Activated T-helper 2 cell treated with anti-CD3 and anti-CD28 coated beads, Interferon-gamma antibody, Interleukin-2, Interleukin-4, amounts not matched to agents 10 μg/mL and 5 μg/mL and 100 μg/mL, durations not matched to agents 14 hours and 24 hours and 36 hours (primary cell): ENCODE measurements at regions of chr3 and their contacts with region 1.

Region 1: GRCh38 chr3:190701096-190701532 is 161.4 kb downstream of the GMNC start:
- DNase-seq: no peak
- H3K4me3 Mint-ChIP-seq: no peak overlapping the region
- H3K27ac Mint-ChIP-seq: no peak overlapping the region
- H3K4me1 Mint-ChIP-seq: peaks cover 8% of the 10 kb centered on the region
- H3K27me3 Mint-ChIP-seq: peaks cover 33% of the 10 kb centered on the region

Region 2: DNA sequence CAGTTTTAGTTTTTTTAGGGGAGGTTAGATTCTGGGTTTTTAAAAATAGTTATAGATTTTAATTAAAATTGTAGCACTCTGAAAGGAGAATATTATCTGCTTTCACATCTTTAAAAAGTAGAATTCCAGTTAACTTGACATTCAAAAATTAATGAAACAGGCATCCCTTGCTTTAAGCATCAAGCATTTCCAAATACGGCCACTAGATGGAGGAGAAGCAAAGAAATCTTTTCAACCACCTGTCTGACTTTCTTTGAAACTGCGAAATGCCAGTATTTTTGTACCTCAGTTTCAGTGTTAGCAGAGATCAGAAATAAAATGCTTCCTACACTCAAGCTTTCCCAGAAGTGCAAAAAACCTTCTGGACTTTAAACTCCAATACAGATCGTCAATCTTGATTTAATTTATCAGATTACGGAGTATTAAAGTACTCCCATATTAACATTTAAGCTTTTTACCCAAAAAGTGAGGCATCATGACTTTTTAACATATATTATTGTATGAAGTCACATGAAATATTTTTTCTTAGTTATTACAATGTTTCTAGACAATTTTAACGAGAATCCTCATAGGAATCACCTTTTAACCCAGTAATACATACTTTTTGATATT is 733.8 kb before region 1 on chr3:
- intact Hi-C with region 1: loop called (anchors 2 kb)
- DNase-seq: no peak
- H3K4me3 Mint-ChIP-seq: no peak overlapping the region
- H3K27ac Mint-ChIP-seq: no peak overlapping the region
- H3K4me1 Mint-ChIP-seq: peaks cover 6% of the 10 kb centered on the region
- H3K27me3 Mint-ChIP-seq: peaks cover 19% of the 10 kb centered on the region

Region 3: DNA sequence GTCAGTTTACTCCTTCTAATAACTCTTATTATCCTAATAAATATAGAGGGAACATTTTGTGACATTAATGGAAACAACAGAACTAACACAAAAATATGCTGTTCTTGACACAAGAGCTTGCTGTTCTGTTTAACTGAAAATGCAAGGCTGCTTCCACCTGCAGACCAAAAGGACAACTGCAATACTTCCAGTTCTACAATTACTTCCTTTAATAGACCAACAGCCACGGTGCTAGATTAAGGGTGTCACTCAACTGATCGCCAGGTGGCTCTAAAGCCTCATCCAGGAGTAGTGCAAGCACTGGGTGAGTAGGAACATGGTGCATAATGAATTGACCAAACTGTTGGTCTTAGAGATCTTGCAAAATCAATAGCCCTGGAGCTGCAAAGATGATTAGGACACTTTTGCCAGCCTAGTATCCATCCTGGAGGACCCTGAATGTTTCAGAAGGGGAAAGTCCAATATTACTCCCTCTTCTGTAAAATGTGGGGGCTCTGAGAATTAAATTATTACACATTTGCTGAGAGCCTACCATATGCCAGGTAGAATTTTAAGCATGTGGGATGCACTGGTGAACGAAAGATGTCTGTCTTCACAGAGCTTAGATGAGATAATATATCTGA is 316.8 kb before region 1 on chr3:
- intact Hi-C with region 1: loop called (anchors 5 kb)
- DNase-seq: no peak
- H3K4me3 Mint-ChIP-seq: no peak overlapping the region
- H3K27ac Mint-ChIP-seq: no peak overlapping the region
- H3K4me1 Mint-ChIP-seq: no peaks in the 10 kb centered on the region
- H3K27me3 Mint-ChIP-seq: peaks cover 7% of the 10 kb centered on the region

Region 4: DNA sequence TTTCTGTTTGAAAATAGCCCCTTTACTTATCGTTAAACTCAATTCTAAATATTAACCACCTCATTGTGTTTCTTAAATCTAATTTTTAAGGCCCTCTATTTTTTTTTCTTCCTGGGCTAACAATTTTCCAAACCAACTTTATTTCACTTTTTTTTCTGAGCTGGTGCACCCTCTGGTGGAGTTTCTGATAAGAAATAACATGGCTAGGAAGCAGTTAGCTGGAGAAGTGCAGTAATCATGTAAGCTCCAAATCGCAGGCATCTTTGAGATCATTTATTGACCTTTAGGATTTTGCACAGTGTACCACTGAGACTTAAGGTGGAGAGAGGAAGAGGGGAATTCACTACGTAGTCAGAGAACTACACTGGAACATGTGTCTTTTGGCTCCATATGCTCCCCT is 257.9 kb before region 1 on chr3:
- intact Hi-C with region 1: loop called (anchors 5 kb)
- DNase-seq: no peak
- H3K4me3 Mint-ChIP-seq: no peak overlapping the region
- H3K27ac Mint-ChIP-seq: no peak overlapping the region
- H3K4me1 Mint-ChIP-seq: peaks cover 10% of the 10 kb centered on the region
- H3K27me3 Mint-ChIP-seq: peaks cover 22% of the 10 kb centered on the region

Region 5: DNA sequence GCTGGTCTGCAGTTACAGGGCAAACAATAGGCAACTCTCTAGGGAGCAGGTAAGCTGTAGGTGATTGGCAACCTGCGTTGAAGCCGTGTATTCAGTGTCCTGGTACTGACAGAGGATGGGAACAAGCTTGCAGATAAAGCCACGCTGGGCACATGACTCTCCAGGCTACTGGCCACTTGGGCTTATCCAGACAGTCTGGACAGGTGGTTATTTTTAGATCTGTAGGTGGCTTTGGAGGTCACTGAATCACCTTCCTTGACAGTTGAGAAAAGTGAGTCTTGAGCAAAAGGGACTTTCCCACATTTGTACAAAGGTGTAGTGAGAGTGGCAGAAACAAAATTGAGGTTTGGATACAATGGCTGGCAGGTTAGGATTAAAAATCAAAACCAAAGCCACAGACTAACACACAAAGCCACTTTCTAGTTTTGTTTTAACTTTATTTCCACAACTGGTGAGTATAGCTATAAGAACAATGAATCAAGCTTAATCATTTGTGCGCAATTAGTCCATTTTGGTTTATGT is 209.5 kb before region 1 on chr3:
- intact Hi-C with region 1: loop called (anchors 5 kb)
- DNase-seq: no peak
- H3K4me3 Mint-ChIP-seq: no peak overlapping the region
- H3K27ac Mint-ChIP-seq: no peak overlapping the region
- H3K4me1 Mint-ChIP-seq: peaks cover 35% of the 10 kb centered on the region
- H3K27me3 Mint-ChIP-seq: peaks cover 73% of the 10 kb centered on the region

Region 6: GRCh38 chr3:190513409-190514162 is 187.5 kb before region 1 on chr3 and contains the start of gene IL1RAP:
- intact Hi-C with region 1: loop called (anchors 2 kb)
- DNase-seq: peak; percentile 89
- H3K4me3 Mint-ChIP-seq: peak within 1 kb of the TSS; percentile 90
- H3K27ac Mint-ChIP-seq: peak within 1 kb of the TSS; percentile 97
- H3K4me1 Mint-ChIP-seq: peaks cover 39% of the 10 kb centered on the region
- H3K27me3 Mint-ChIP-seq: no peaks in the 10 kb centered on the region
- total RNA-seq, gene IL1RAP: 34.5 and 38.6 TPM in 2 replicates

Region 7: DNA sequence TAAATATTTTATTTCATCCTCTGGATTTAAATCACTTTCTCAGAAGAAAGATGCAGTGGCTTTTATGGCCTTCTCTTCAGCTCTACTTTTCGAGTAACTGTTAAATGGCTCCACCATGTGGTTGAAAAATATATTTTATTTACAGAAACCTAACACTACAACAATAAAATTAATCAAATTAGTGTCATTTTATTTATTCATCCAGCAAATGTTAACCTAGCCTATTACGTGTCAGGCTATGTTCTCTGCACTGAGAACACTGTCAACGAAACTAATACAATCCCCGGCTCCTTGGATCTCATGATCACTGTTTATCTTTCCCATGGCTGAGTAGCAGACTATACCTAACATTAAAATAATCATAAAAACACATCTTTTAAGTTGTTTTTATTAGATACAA is 349.9 kb after region 1 on chr3:
- intact Hi-C with region 1: loop called (anchors 5 kb)
- DNase-seq: no peak
- H3K4me3 Mint-ChIP-seq: no peak overlapping the region
- H3K27ac Mint-ChIP-seq: no peak overlapping the region
- H3K4me1 Mint-ChIP-seq: no peaks in the 10 kb centered on the region
- H3K27me3 Mint-ChIP-seq: no peaks in the 10 kb centered on the region